ENCODE measurements at regions of chr13 and their contacts with region 1.

Region 1: GRCh38 chr13:32476021-32476731 is 48.2 kb upstream of the N4BP2L1 start:
- DNase-seq: no peak
- H3K27ac ChIP-seq: no peak overlapping the region
- CTCF ChIP-seq: no peak

Region 2: GRCh38 chr13:32017474-32017873 is 458.7 kb before region 1 on chr13:
- CTCF ChIA-PET with region 1: interaction called, 10 read pairs
- POLR2A ChIA-PET with region 1: no interaction called
- DNase-seq: no peak
- H3K27ac ChIP-seq: no peak overlapping the region
- CTCF ChIP-seq: no peak